ENCODE measurements at regions of chr17 and their contacts with region 1.

Region 1: DNA sequence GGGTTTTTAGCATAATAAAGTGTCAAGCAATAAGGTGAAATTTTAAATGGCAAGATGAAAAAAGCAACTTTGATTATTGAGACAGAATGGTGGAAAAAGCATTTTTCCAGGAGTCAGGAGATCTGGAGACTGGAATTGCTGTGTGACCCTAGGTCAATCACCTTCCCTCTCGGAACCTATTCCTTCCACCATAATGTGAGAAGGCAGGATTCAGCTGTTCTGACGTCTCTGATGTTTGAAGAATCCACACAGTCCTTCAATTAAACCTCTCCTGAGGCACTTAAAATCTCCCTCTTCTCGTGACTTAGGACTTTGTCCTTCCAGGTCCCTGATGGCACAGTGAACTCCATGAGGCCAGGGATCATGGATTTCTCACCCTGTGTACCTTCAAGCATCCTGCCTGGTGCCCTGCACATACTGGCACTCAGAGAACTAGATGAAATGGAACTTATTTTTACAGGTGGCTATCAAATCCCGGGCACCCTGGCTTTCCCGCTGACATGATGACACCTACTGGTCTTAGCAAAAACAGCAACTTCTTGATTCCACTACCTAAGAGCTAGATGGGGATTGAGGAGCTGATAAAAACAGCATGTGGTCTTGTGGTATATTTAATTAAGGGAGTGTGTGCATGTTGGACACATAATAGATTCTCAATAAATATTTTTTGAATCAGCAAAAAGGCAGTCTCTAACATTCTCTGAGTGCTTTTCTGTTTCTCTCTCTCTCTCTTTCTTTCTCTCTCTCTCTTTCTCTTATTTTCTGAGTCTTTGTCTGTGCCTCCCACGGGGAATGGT is 2.3 kb upstream of the CCDC182 start:
- DNase-seq: no peak
- ATAC-seq: peak; percentile 77 to 85 (median 82)
- H3K4me3 ChIP-seq: no peak overlapping the region
- H3K27ac ChIP-seq: no peak overlapping the region
- H3K4me1 ChIP-seq: no peaks in the 10 kb centered on the region
- H3K27me3 ChIP-seq: no peaks in the 10 kb centered on the region
- CTCF ChIP-seq: peak; percentile 49 to 78 (median 74)
- POLR2A ChIP-seq: no peak

Region 2: GRCh38 chr17:57121338-57122042 is 625.9 kb before region 1 on chr17:
- intact Hi-C with region 1: loop called in 1 of 2 experiments (anchors 10 kb)
- DNase-seq: no peak
- ATAC-seq: peak in 3 of 4 donors; percentile 26 to 46 (median 41)
- H3K4me3 ChIP-seq: no peak overlapping the region
- H3K27ac ChIP-seq: no peak overlapping the region
- H3K4me1 ChIP-seq: peaks cover 0 to 6% (median 0%) of the 10 kb centered on the region in 4 donors
- H3K27me3 ChIP-seq: no peaks in the 10 kb centered on the region
- CTCF ChIP-seq: peak; percentile 18 to 45 (median 39)
- POLR2A ChIP-seq: no peak

Region 3: DNA sequence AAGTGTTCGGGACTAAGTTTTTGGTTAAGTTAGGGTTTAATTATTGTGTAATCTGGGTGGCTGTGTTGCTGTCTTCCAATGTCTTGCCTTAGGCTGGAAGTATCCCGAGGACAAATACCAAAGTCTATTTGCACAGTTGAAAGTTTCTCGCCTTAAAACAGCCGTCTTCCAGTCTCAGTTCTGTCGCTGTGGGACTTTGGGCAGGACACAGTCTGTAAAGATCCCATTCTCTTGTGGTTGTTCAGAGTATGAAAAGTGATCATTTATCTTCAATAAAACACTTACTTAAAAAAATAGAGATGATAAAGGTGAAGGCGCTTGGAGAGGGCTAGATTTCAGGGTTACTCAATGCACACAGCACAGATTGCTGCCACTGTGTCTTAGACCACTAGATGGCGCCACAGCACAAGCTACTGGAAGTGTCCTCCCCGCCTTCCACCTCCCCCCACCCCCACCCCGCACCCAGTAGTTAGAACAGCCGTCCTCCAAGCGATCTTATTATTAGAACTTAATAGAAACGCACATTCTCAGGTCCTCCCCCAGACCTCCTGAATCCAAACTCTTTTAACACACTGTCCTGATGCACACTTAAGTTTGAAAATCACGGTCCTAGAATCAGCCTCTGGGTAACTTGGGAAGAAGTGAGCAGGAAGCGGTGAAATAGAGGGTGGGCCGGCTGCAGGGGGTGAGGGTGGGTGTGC is 616.5 kb before region 1 on chr17:
- intact Hi-C with region 1: loop called (anchors 10 kb)
- DNase-seq: peak; percentile 75 to 79 (median 78)
- ATAC-seq: peak; percentile 89 to 98 (median 95)
- H3K4me3 ChIP-seq: no peak overlapping the region
- H3K27ac ChIP-seq: no peak overlapping the region
- H3K4me1 ChIP-seq: peaks cover 0 to 6% (median 0%) of the 10 kb centered on the region in 4 donors
- H3K27me3 ChIP-seq: no peaks in the 10 kb centered on the region
- CTCF ChIP-seq: peak; percentile 60 to 89 (median 87)
- POLR2A ChIP-seq: no peak

Region 4: GRCh38 chr17:57243171-57243948 is 504.1 kb before region 1 on chr17:
- intact Hi-C with region 1: loop called in 1 of 2 experiments (anchors 10 kb)
- DNase-seq: peak; percentile 52 to 72 (median 65)
- ATAC-seq: peak; percentile 96 to 100 (median 98)
- H3K4me3 ChIP-seq: no peak overlapping the region
- H3K27ac ChIP-seq: no peak overlapping the region
- H3K4me1 ChIP-seq: no peaks in the 10 kb centered on the region
- H3K27me3 ChIP-seq: no peaks in the 10 kb centered on the region
- CTCF ChIP-seq: peak; percentile 95 to 100 (median 99)
- POLR2A ChIP-seq: no peak

Region 5: DNA sequence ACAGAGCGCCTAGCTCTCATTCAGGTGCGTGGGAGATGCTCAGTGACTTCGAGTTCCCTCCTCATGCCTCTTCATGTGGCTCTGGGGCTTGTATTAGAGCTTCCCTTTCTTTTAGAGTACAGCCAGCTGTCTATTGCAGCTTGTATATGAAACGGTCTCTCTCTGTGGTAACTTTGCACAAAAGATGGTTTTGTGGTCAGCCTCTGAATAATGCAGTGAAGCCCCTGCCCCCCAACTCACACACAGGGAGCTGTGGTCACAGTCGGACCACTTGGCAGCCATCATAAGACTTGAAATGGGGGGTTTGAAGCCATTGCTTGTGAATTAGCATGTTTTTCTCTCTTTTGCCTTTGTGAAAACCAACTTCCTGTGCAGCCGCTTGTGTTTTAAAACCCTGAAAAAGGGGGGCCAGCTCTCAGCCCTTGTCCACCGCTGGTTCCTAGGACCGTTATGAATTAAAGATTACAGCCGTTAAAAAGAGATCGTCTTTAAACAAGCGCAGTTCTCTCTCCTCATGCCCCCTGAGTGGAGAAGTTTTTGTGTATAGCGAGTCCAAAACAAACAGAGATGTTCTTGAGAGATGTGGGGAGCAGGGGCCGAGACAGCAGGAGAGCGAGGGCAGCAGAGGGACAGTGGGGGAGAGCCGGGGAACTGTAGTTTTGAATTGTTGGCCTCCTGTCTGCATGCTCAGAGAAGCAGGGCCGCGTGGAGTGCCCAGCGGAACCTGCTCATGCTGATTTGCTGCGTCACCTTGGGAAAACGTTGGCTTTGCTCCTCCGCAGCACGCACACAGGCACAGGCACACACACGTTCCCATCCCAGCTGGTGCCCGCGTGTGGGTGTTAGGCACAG is 292.1 kb before region 1 on chr17:
- intact Hi-C with region 1: no loop called
- DNase-seq: peak in 1 of 3 donors; percentile 4
- ATAC-seq: peak in 1 of 4 donors; percentile 15
- H3K4me3 ChIP-seq: no peak overlapping the region
- H3K27ac ChIP-seq: no peak overlapping the region
- H3K4me1 ChIP-seq: peaks cover 0 to 5% (median 0%) of the 10 kb centered on the region in 4 donors
- H3K27me3 ChIP-seq: no peaks in the 10 kb centered on the region
- CTCF ChIP-seq: no peak
- POLR2A ChIP-seq: no peak

Region 6: GRCh38 chr17:57849874-57850754 is 102.7 kb after region 1 on chr17 and contains the start of gene MRPS23:
- intact Hi-C with region 1: no loop called
- DNase-seq: peak; percentile 99
- ATAC-seq: peak; percentile 98 to 99 (median 98)
- H3K4me3 ChIP-seq: peak within 1 kb of the TSS; percentile 63 to 85 (median 65)
- H3K27ac ChIP-seq: peak within 1 kb of the TSS; percentile 73 to 80 (median 77)
- H3K4me1 ChIP-seq: peaks cover 0 to 9% (median 4%) of the 10 kb centered on the region in 4 donors
- H3K27me3 ChIP-seq: no peaks in the 10 kb centered on the region
- CTCF ChIP-seq: no peak
- POLR2A ChIP-seq: peak; percentile 55
- total RNA-seq, gene MRPS23: 13.0 to 23.0 (median 15.2) TPM